AG04450 (cell line): ENCODE measurements at regions of chrX and their contacts with region 1.

Region 1: GRCh38 chrX:19017271-19017670 is 33.4 kb upstream of the PHKA2 start:
- DNase-seq: no peak
- H3K4me3 ChIP-seq: no peak overlapping the region
- H3K27ac ChIP-seq: no peak overlapping the region
- H3K27me3 ChIP-seq: no peaks in the 10 kb centered on the region
- CTCF ChIP-seq: peak; percentile 60

Region 2: DNA sequence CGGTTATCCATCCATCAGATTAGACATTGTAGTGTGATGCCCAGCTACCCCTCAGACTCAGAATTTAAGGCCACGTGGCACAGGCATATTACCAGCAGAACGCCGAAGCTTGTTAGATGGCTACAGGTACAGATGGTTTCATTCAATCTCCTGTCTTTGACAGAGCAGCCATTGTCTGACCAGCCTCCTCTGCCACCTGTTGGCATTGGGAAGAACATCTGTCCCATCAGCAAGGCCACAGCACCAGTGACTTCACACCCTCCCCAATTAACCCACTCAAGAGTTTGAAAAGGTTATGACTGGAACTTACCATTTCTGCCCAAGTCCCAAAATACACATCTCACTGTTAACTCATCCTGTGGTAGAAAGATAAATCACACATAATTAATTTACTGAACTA is 11.4 kb before region 1 on chrX:
- CTCF ChIA-PET with region 1: interaction called, 12 read pairs
- POLR2A ChIA-PET with region 1: no interaction called
- DNase-seq: no peak
- H3K4me3 ChIP-seq: no peak overlapping the region
- H3K27ac ChIP-seq: no peak overlapping the region
- H3K27me3 ChIP-seq: no peaks in the 10 kb centered on the region
- CTCF ChIP-seq: no peak

Region 3: GRCh38 chrX:19030805-19031204 is 13.5 kb after region 1 on chrX:
- CTCF ChIA-PET with region 1: interaction called, 10 read pairs
- POLR2A ChIA-PET with region 1: no interaction called
- DNase-seq: no peak
- H3K4me3 ChIP-seq: no peak overlapping the region
- H3K27ac ChIP-seq: no peak overlapping the region
- H3K27me3 ChIP-seq: no peaks in the 10 kb centered on the region
- CTCF ChIP-seq: no peak

Region 4: GRCh38 chrX:19046343-19047215 is 29.3 kb after region 1 on chrX:
- CTCF ChIA-PET with region 1: no interaction called
- POLR2A ChIA-PET with region 1: no interaction called
- DNase-seq: no peak
- H3K4me3 ChIP-seq: no peak overlapping the region
- H3K27ac ChIP-seq: no peak overlapping the region
- H3K27me3 ChIP-seq: no peaks in the 10 kb centered on the region
- CTCF ChIP-seq: no peak

Region 5: GRCh38 chrX:19183761-19184477 is 166.6 kb after region 1 on chrX:
- CTCF ChIA-PET with region 1: no interaction called
- POLR2A ChIA-PET with region 1: no interaction called
- DNase-seq: no peak
- H3K4me3 ChIP-seq: no peak overlapping the region
- H3K27ac ChIP-seq: no peak overlapping the region
- H3K27me3 ChIP-seq: no peaks in the 10 kb centered on the region
- CTCF ChIP-seq: no peak